Posterior vena cava (tissue), 2 donors: ENCODE measurements at regions of chr21 and their contacts with region 1.

Region 1: DNA sequence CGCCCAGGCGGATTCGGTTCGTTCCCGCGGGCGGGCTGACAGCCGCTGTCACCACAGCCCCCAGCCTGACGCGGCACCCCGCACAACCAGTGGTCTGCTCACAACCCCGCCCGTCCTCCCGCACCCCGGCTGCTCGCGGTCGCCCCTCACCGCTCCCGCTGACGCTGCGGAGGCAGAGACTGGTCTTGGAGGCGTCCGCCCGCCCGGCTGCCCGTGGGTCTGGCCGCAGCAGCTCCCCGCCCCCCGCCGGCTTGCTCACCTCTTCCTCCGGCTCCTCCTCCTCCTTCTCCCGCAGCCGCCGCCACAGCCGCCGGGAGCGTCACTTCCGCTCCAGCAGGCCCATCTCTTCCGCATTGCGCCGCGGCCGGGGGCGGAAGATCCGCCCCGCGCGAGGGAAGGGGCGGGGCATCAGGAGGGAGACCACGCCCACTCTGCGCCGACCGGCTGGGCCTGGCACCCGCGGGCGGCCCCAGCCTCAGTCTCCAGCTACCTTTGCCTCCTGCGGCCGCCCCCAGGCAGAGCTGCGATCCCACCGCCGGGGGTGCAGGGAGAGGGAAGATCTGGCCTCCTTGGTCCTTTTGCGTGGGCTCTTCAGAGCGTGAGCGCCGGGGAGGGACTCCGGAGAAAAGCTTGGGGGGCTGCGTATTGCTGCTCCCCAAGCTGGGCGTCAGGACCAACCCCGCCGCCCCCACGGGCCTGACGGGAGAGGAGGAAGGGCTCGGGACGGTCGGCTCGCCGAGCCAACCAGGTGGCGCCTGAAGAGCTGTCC is at the start of gene SYNJ1:
- DNase-seq: peak; percentile 99
- total RNA-seq, gene SYNJ1: 15.1 to 18.9 TPM

Region 2: GRCh38 chr21:32741336-32741972 is 13.6 kb after region 1 on chr21:
- intact Hi-C with region 1: no loop called
- DNase-seq: no peak

Region 3: GRCh38 chr21:32770871-32771523 is 43.1 kb after region 1 on chr21:
- intact Hi-C with region 1: loop called in 1 of 2 experiments (anchors 5 kb)
- DNase-seq: peak; percentile 91